Activated naive CD4-positive, alpha-beta T cell treated with anti-CD3 and anti-CD28 coated beads for 36 hours (primary cell): ENCODE measurements at regions of chr4 and their contacts with region 1.

Region 1: DNA sequence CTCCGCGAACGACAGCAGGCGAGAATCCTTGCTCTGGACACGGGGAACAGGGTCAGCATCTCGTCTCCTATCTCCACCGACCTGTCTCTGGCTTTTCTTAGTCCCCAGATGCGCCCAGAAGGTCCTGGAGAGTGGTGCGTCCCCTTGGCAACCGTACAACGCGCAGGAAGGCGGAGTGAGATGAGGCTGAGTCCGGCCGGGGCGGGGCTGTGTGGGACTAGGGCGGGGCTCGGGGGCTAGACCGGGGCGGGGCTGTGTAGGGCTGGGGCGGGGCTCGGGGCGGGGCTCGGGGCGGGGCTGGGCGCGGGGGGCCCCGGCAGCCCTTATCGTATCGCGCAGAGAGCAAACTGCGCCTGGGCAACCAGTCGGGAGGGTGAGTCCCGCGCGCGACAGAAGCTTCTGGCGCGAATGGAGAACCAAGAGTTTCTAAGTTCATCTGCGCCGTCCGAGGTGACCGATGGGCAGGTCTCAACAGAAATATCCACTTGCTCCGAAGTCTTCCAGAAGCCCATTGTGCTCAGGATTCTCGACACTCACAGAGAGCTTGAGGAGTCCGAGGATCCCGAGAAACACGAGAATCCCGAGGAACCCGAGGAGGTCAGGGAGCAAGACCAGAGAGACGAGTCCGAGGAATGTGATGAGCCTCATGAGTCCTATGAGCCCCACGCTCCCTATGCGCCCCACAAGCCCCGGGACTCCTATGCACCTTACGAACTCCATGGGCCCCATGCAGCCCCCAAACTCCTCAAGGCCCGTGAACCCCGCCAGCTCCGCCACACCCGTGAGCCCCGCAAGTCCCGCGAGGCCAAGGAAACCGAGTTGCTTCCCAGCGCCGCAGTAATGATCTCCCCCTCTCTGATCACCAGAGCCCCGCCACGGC is 24.9 kb downstream of the ARL9 start:
- DNase-seq: peak; percentile 88
- H3K4me3 Mint-ChIP-seq: peak overlapping the region; percentile 58
- H3K27ac Mint-ChIP-seq: no peak overlapping the region
- H3K4me1 Mint-ChIP-seq: peaks cover 1% of the 10 kb centered on the region
- H3K27me3 Mint-ChIP-seq: peaks cover 4% of the 10 kb centered on the region

Region 2: GRCh38 chr4:55395529-55396307 is 1134.8 kb before region 1 on chr4 and contains the start of gene TMEM165:
- CTCF ChIA-PET with region 1: no interaction called
- intact Hi-C with region 1: loop called (anchors 5 kb)
- DNase-seq: peak; percentile 92
- H3K4me3 Mint-ChIP-seq: peak within 1 kb of the TSS; percentile 96
- H3K27ac Mint-ChIP-seq: peak within 1 kb of the TSS; percentile 89
- H3K4me1 Mint-ChIP-seq: peaks cover 39% of the 10 kb centered on the region
- H3K27me3 Mint-ChIP-seq: no peaks in the 10 kb centered on the region
- total RNA-seq, gene TMEM165: 39.1 to 40.6 TPM

Region 3: DNA sequence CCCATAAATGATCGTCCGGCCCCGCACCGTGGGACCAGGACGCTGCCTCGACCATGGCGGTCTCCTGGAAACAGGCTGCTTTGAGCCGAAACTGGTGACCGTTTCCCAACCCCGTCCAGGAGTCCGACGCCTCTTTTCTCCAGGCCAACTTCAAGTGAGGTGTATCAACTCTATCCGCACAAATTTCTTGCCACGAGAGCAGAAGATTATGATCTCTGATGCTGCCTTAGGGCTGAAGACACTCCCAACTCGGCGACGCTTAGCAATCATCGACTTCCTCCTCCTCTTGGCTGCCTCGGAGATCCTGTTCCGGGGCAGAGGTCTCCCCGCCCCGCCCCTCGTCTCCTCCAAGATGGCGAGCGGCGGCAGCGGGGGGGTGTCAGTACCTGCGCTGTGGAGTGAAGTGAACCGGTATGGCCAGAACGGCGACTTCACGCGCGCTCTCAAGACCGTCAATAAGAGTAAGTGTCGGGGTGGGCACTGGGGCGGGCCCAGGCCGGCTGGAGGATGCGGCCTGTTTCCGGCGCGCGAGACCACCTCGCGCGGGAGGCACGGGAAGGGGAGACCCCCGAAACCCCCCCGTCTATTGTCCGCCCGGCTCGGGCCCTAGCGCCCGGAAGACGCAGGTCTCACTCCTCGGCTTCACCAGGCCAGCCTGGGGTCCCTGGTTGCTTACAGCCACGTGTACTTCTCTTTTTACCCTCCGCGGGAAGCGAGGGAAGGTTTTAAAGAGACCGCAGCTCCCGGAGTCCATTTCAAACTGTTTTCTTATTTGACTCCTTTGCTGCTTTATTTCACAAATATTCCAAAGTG is 63.0 kb before region 1 on chr4 and contains the start of gene SRP72:
- CTCF ChIA-PET with region 1: no interaction called
- intact Hi-C with region 1: loop called (anchors 1 kb)
- DNase-seq: peak; percentile 91
- H3K4me3 Mint-ChIP-seq: peak within 1 kb of the TSS; percentile 100
- H3K27ac Mint-ChIP-seq: peak within 1 kb of the TSS; percentile 97
- H3K4me1 Mint-ChIP-seq: peaks cover 33% of the 10 kb centered on the region
- H3K27me3 Mint-ChIP-seq: no peaks in the 10 kb centered on the region
- total RNA-seq, gene SRP72: 200 to 212 TPM

Region 4: DNA sequence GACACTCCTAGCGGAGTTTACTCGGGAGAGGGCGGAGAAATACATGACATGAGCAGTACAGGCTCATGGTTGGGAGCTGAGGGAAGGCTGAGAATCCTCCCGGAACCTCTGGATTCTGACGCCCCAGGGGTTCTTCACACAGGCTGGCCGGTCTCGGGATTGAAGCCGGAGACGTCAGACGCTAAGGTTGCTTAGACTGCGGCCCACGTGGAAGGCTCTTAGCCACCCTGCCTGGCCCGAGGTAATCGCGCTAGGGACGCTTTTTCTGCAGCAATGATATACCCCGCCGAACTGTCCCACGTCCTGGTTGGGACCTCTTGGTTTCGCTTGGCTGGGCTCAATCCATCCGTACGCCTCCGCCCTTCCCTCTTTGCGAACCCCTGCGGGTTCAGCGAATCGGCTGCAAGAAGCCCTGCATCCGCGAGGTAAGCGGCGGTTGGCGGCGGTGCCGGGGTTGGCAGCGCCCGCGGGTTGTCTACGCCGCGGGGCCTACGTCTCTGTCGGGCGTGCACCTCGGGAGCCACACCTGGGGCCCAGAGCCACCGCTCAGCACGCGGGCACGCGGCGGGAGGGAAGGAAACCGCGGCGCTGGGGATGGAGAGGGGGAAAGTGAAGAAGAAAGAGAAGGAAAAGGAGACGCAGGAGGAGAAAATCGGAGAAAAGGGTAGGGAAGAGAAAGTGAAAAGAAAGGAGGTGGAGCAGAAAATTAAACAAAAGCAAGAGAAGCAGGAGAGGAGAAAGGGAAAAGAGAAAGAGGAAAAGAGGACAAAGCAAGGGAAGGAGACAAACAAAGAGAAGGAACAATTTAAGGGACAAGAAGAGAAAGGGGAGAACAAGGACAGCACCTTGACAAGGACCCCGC is 25.0 kb before region 1 on chr4 and contains the start of gene ARL9:
- CTCF ChIA-PET with region 1: no interaction called
- intact Hi-C with region 1: loop called (anchors 1 kb)
- DNase-seq: peak; percentile 65
- H3K4me3 Mint-ChIP-seq: peak within 1 kb of the TSS; percentile 86
- H3K27ac Mint-ChIP-seq: no peak within 1 kb of the TSS
- H3K4me1 Mint-ChIP-seq: peaks cover 19% of the 10 kb centered on the region
- H3K27me3 Mint-ChIP-seq: peaks cover 8% of the 10 kb centered on the region
- total RNA-seq, gene ARL9: 0.21 to 0.27 TPM

Region 5: DNA sequence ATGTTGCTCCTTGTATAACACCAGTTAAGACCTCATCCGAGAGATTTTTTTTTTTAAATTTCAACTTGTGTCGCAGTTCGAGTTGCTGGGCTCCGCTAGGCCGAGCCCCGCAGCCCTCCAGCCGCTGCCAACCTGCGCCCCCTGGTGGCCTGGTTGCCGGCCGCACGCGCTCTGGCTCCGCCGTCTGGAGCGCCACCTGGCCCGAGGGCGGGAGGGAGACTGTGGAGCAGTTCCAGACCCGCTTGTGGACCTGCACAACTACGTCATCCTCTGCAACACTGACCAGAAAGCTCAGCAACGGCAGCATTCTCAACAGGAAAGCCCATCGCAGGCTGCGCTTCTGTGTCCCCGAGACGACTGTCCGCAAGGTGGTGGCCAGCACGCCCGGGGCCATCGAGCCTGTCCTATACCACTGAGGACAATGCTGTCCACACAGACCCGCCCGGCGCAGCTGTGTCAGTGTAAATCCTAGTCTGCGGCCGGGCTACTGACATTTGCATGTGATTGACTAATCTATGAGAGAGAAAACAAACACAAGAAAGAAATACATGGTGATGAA is 14.1 kb after region 1 on chr4:
- CTCF ChIA-PET with region 1: interaction called, 9 read pairs
- intact Hi-C with region 1: loop called (anchors 1 kb)
- DNase-seq: peak; percentile 86
- H3K4me3 Mint-ChIP-seq: peak overlapping the region; percentile 57
- H3K27ac Mint-ChIP-seq: no peak overlapping the region
- H3K4me1 Mint-ChIP-seq: peaks cover 14% of the 10 kb centered on the region
- H3K27me3 Mint-ChIP-seq: no peaks in the 10 kb centered on the region

Region 6: GRCh38 chr4:56821381-56822243 is 291.1 kb after region 1 on chr4 and contains the start of gene SPINK2:
- CTCF ChIA-PET with region 1: no interaction called
- intact Hi-C with region 1: loop called (anchors 2 kb)
- DNase-seq: peak; percentile 75
- H3K4me3 Mint-ChIP-seq: peak within 1 kb of the TSS; percentile 74
- H3K27ac Mint-ChIP-seq: no peak within 1 kb of the TSS
- H3K4me1 Mint-ChIP-seq: peaks cover 25% of the 10 kb centered on the region
- H3K27me3 Mint-ChIP-seq: peaks cover 12% of the 10 kb centered on the region
- total RNA-seq, gene SPINK2: 0.83 to 1.4 TPM

Region 7: DNA sequence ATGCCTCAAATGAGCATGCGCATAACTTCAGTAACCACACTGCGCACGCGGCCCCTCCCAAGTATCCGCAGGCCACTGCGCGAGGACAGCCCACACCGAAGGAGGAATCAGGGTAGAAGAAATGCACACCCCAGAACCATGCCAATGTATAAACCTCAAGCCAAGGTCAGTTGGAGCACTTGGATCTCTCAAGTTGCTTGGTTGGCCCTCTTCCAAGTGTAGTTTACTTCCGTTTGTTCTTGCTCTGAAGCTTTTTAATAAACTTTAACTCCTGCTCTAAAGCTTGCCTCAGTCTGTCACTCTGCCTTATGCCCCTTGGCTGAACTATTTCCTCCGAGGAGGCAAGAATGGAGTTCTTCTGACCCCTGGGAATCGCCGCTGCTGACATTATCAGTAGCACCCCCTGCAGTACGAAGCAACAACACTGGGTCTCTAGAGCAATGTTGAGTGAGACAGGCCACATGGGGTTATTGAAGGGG is 313.0 kb after region 1 on chr4:
- CTCF ChIA-PET with region 1: no interaction called
- intact Hi-C with region 1: loop called (anchors 5 kb)
- DNase-seq: no peak
- H3K4me3 Mint-ChIP-seq: no peak overlapping the region
- H3K27ac Mint-ChIP-seq: no peak overlapping the region
- H3K4me1 Mint-ChIP-seq: no peaks in the 10 kb centered on the region
- H3K27me3 Mint-ChIP-seq: no peaks in the 10 kb centered on the region